T-cell (primary cell): ENCODE measurements at regions of chr3 and their contacts with region 1.

Region 1: GRCh38 chr3:155778462-155778861 is 27.6 kb downstream of the C3orf33 start:
- DNase-seq: no peak
- ATAC-seq: no peak
- H3K4me3 ChIP-seq: no peak overlapping the region
- H3K4me3 Mint-ChIP-seq: no peak overlapping the region
- H3K27ac ChIP-seq: no peak overlapping the region
- H3K27ac Mint-ChIP-seq: no peak overlapping the region
- H3K4me1 ChIP-seq: no peaks in the 10 kb centered on the region
- H3K4me1 Mint-ChIP-seq: no peaks in the 10 kb centered on the region
- H3K27me3 ChIP-seq: no peaks in the 10 kb centered on the region
- H3K27me3 Mint-ChIP-seq: no peaks in the 10 kb centered on the region

Region 2: DNA sequence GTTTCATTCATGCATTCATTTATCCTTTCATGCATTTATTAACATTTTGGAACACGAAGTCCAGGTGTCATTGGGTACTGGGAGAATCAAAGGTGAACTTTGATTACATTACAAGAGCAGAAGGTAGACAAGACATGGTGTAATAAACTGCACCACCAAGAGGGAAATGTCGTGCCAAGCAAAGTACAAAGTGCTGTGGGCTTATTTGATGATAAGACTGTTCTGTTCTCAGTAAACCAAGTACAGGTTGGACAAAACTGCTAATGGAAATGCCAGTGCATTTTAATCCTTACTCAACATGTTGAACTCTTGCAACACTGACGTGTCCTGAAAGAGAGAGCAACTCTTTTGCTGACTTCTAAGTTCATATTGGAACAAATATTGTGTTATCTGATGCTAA is 629.0 kb before region 1 on chr3:
- CTCF ChIA-PET with region 1: no interaction called
- POLR2A ChIA-PET with region 1: no interaction called
- DNase-seq: no peak
- ATAC-seq: no peak
- H3K4me3 ChIP-seq: no peak overlapping the region
- H3K4me3 Mint-ChIP-seq: no peak overlapping the region
- H3K27ac ChIP-seq: no peak overlapping the region
- H3K27ac Mint-ChIP-seq: no peak overlapping the region
- H3K4me1 ChIP-seq: no peaks in the 10 kb centered on the region
- H3K4me1 Mint-ChIP-seq: peaks cover 0 to 3% (median 0%) of the 10 kb centered on the region in 3 donors
- H3K27me3 ChIP-seq: no peaks in the 10 kb centered on the region
- H3K27me3 Mint-ChIP-seq: no peaks in the 10 kb centered on the region

Region 3: GRCh38 chr3:155370198-155370597 is 408.3 kb before region 1 on chr3:
- CTCF ChIA-PET with region 1: no interaction called
- POLR2A ChIA-PET with region 1: no interaction called
- DNase-seq: no peak
- ATAC-seq: no peak
- H3K4me3 ChIP-seq: no peak overlapping the region
- H3K4me3 Mint-ChIP-seq: no peak overlapping the region
- H3K27ac ChIP-seq: no peak overlapping the region
- H3K27ac Mint-ChIP-seq: no peak overlapping the region
- H3K4me1 ChIP-seq: no peaks in the 10 kb centered on the region
- H3K4me1 Mint-ChIP-seq: no peaks in the 10 kb centered on the region
- H3K27me3 ChIP-seq: no peaks in the 10 kb centered on the region
- H3K27me3 Mint-ChIP-seq: no peaks in the 10 kb centered on the region

Region 4: DNA sequence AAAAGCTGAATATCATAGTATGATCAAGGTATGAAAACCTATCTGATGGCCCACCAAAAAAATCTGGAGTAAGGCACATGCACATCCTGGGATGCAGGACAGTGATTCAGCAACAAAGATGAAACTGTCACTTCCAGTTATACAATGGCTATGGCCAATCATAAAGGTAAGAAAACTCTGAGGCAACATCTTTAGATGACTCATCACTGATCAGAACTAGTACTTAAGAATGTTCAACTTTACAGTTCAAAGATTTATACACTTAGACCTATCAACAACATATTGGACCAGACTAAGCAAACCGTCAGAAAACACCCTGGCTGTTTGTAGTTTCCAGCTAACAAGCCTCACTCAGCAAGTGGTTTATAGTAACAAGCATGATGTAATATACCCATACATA is 12.3 kb before region 1 on chr3:
- CTCF ChIA-PET with region 1: no interaction called
- POLR2A ChIA-PET with region 1: interaction called in 1 of 2 experiments, 18 read pairs
- DNase-seq: no peak
- ATAC-seq: no peak
- H3K4me3 ChIP-seq: no peak overlapping the region
- H3K4me3 Mint-ChIP-seq: no peak overlapping the region
- H3K27ac ChIP-seq: no peak overlapping the region
- H3K27ac Mint-ChIP-seq: no peak overlapping the region
- H3K4me1 ChIP-seq: no peaks in the 10 kb centered on the region
- H3K4me1 Mint-ChIP-seq: no peaks in the 10 kb centered on the region
- H3K27me3 ChIP-seq: no peaks in the 10 kb centered on the region
- H3K27me3 Mint-ChIP-seq: no peaks in the 10 kb centered on the region